ENCODE measurements at regions of chr7 and their contacts with region 1.

Region 1: GRCh38 chr7:150898475-150899011 is 46.2 kb downstream of the AOC1 start:
- DNase-seq: peak; percentile 83
- ATAC-seq: peak; percentile 86
- H3K4me3 Mint-ChIP-seq: no peak overlapping the region
- H3K27ac Mint-ChIP-seq: no peak overlapping the region
- H3K4me1 Mint-ChIP-seq: peaks cover 8% of the 10 kb centered on the region
- H3K27me3 Mint-ChIP-seq: peaks cover 62% of the 10 kb centered on the region

Region 2: GRCh38 chr7:150876817-150877526 is 21.6 kb before region 1 on chr7:
- CTCF ChIA-PET with region 1: interaction called, 16 read pairs
- POLR2A ChIA-PET with region 1: no interaction called
- DNase-seq: peak; percentile 41
- ATAC-seq: peak; percentile 30
- H3K4me3 Mint-ChIP-seq: no peak overlapping the region
- H3K27ac Mint-ChIP-seq: no peak overlapping the region
- H3K4me1 Mint-ChIP-seq: no peaks in the 10 kb centered on the region
- H3K27me3 Mint-ChIP-seq: peaks cover 50% of the 10 kb centered on the region

Region 3: GRCh38 chr7:150909200-150909995 is 10.9 kb after region 1 on chr7:
- CTCF ChIA-PET with region 1: interaction called, 25 read pairs
- POLR2A ChIA-PET with region 1: no interaction called
- DNase-seq: peak; percentile 77
- ATAC-seq: peak; percentile 83
- H3K4me3 Mint-ChIP-seq: peak overlapping the region; percentile 44
- H3K27ac Mint-ChIP-seq: peak overlapping the region; percentile 71
- H3K4me1 Mint-ChIP-seq: peaks cover 12% of the 10 kb centered on the region
- H3K27me3 Mint-ChIP-seq: peaks cover 51% of the 10 kb centered on the region

Region 4: DNA sequence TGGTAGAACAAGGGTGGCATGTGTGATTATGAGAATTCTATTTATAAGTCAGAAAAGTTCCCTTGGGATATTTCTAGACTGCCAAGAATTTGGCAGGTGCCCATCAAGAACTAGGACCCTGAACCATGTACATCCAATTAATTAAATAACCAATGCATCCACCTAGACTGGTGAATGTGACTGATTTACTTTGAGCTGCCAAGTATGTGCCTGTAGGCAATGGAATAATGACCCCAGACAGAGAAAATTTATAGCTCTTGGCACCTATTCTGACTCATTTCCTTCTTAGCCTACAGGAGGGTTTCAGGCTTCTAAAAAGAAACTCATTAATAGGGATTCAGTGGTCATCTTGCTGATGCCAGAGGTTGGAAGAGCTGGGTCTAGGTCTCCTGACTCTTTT is 24.7 kb after region 1 on chr7:
- CTCF ChIA-PET with region 1: interaction called, 11 read pairs
- POLR2A ChIA-PET with region 1: no interaction called
- DNase-seq: no peak
- ATAC-seq: no peak
- H3K4me3 Mint-ChIP-seq: no peak overlapping the region
- H3K27ac Mint-ChIP-seq: no peak overlapping the region
- H3K4me1 Mint-ChIP-seq: peaks cover 19% of the 10 kb centered on the region
- H3K27me3 Mint-ChIP-seq: peaks cover 51% of the 10 kb centered on the region

Region 5: GRCh38 chr7:150931199-150931869 is 32.8 kb after region 1 on chr7:
- CTCF ChIA-PET with region 1: interaction called, 12 read pairs
- POLR2A ChIA-PET with region 1: no interaction called
- DNase-seq: peak; percentile 61
- ATAC-seq: peak; percentile 83
- H3K4me3 Mint-ChIP-seq: no peak overlapping the region
- H3K27ac Mint-ChIP-seq: no peak overlapping the region
- H3K4me1 Mint-ChIP-seq: peaks cover 9% of the 10 kb centered on the region
- H3K27me3 Mint-ChIP-seq: peaks cover 28% of the 10 kb centered on the region

Region 6: DNA sequence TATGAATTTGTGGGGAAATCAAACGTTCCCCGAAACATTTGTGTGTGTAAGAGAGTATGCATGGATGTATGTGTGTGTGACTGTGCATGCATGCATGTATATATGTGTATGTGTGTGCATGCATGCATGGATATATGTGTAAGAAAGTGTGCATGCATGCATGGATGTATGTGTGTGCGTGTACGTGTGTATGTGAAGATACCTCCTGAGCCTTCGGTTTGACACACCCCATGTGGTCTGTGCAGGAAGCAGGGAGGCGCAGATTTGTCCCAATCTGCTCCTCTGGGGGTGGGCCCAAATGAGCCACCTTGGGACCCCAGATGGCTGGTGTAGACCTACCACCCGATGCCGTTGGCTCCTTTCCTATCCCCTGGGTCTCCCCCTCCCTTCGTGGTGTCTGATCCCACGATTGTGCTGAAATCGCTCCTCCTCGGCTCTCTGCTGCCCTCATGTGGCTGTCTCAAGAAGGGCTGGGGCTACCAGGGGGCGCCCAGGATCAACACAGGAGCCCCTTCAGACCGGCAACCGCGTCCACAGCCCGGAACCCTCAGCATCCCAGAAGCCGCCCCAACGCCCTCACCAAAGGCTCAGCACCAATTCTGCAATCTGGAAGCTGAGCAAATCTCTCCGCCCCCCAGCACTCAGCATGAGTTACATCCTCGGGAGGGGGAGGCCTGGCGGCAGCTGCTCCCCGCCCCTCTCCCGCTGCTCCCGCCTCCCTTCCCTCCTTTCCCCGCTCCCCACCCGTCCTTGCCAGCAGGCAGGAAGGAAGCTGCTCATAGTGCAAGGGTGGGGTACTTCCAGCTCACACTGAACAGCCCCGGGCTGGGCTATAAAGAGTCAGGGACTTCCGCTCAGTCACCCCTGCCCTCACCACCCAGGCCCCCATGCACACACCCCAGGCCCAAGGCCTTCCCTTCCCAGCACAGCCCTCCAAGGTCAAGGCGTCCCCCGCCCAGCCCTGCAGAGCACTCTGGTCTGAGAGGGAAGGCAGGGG is 90.0 kb after region 1 on chr7:
- CTCF ChIA-PET with region 1: interaction called, 35 read pairs
- POLR2A ChIA-PET with region 1: no interaction called
- DNase-seq: peak; percentile 75
- ATAC-seq: peak; percentile 73
- H3K4me3 Mint-ChIP-seq: no peak overlapping the region
- H3K27ac Mint-ChIP-seq: no peak overlapping the region
- H3K4me1 Mint-ChIP-seq: peaks cover 16% of the 10 kb centered on the region
- H3K27me3 Mint-ChIP-seq: peaks cover 25% of the 10 kb centered on the region